ENCODE measurements at regions of chr1 and their contacts with region 1.

Region 1: GRCh38 chr1:27392096-27392777 is at the start of gene GPR3:
- DNase-seq: peak; percentile 96
- H3K4me3 ChIP-seq: peak within 1 kb of the TSS; percentile 81
- H3K27ac ChIP-seq: peak within 1 kb of the TSS; percentile 80
- H3K4me1 ChIP-seq: peaks cover 12% of the 10 kb centered on the region
- H3K27me3 ChIP-seq: no peaks in the 10 kb centered on the region
- CTCF ChIP-seq: peak; percentile 82
- total RNA-seq, gene GPR3: 3.1 and 4.9 TPM in 2 replicates

Region 2: GRCh38 chr1:27365372-27366112 is 26.7 kb before region 1 on chr1:
- CTCF ChIA-PET with region 1: interaction called, 11 read pairs
- POLR2A ChIA-PET with region 1: no interaction called
- intact Hi-C with region 1: no loop called
- DNase-seq: peak; percentile 87
- H3K4me3 ChIP-seq: peak overlapping the region; percentile 59
- H3K27ac ChIP-seq: peak overlapping the region; percentile 8
- H3K4me1 ChIP-seq: peaks cover 10% of the 10 kb centered on the region
- H3K27me3 ChIP-seq: no peaks in the 10 kb centered on the region
- CTCF ChIP-seq: no peak

Region 3: DNA sequence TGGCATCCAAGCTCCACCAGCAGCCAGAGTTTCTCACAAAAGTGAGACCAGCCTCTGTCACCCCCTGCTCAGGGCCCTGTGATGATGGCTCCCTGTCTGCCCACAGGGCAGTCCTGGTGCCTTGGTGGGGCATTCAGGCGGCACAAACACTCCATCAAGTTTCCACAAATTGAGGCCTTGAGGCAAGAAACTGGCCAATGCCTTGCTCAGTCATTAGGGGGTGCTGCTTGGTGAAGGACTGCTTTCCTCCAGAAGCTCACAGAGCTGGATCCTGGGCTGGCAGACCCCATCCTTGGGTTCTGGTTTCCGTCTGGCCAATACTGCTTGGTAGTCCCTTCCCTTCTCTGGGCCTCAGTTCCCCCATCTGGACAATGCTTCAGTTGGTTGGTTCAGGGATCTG is 224.2 kb after region 1 on chr1:
- CTCF ChIA-PET with region 1: interaction called, 14 read pairs
- POLR2A ChIA-PET with region 1: no interaction called
- intact Hi-C with region 1: no loop called
- DNase-seq: no peak
- H3K4me3 ChIP-seq: no peak overlapping the region
- H3K27ac ChIP-seq: no peak overlapping the region
- H3K4me1 ChIP-seq: no peaks in the 10 kb centered on the region
- H3K27me3 ChIP-seq: no peaks in the 10 kb centered on the region
- CTCF ChIP-seq: peak; percentile 45

Region 4: GRCh38 chr1:27662707-27663393 is 270.6 kb after region 1 on chr1:
- CTCF ChIA-PET with region 1: no interaction called
- POLR2A ChIA-PET with region 1: no interaction called
- intact Hi-C with region 1: loop called (anchors 5 kb)
- DNase-seq: peak; percentile 89
- H3K4me3 ChIP-seq: no peak overlapping the region
- H3K27ac ChIP-seq: peak overlapping the region; percentile 4
- H3K4me1 ChIP-seq: peaks cover 3% of the 10 kb centered on the region
- H3K27me3 ChIP-seq: no peaks in the 10 kb centered on the region
- CTCF ChIP-seq: peak; percentile 88